H1 (cell line): ENCODE measurements at regions of chr2 and their contacts with region 1.

Region 1: DNA sequence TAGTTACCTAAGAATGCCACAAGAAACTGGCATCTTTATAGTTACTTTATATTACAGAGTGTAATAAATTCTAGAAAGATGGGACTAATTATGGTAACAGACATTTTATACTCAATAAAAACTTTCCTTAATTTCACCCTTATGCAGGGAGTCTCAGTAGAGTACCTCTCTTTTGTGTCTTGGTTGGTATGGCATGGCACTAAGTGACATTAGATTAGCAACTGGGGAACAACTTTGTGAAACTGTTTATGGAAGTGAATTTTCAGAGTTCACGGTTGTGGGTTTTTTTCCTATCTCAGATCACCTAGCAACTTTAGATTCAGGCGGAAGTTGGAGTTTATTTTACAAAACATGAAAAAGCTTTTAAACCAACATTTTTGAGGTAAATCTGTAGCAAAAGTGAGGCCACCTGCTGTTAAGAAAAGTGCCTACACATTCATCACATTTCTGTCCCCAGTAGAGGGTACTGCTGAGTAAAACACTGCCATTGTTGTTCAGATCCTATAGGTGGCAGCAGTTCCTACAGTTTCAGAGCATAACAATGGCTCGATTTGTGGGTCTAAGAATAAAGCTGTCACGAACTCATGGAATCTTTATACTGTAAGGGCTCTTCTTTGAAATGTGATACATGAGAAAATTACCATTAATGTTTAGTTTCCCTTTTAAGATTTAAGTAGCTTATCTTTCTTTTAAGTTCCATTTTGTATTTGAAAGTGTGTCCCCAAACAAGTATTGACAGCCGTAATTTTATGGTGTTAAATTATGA is 117.6 kb downstream of the CAMKMT start:
- DNase-seq: peak in 1 of 2 experiments; percentile 5
- H3K4me3 ChIP-seq: no peak overlapping the region
- H3K27ac ChIP-seq: no peak overlapping the region
- H3K4me1 ChIP-seq: peaks cover 0 to 3% (median 1%) of the 10 kb centered on the region in 4 experiments; a peak in 1 of 7 replicates
- H3K27me3 ChIP-seq: peaks cover 0 to 1% (median 0%) of the 10 kb centered on the region in 4 experiments; a peak in 1 of 7 replicates
- CTCF ChIP-seq: peak in 2 of 3 experiments; percentile 100; a peak in 3 of 4 replicates
- EP300 ChIP-seq: no peak
- POLR2A ChIP-seq: no peak
- RAD21 ChIP-seq: peak; percentile 94 to 97

Region 2: GRCh38 chr2:44429034-44429433 is 50.3 kb before region 1 on chr2:
- CTCF ChIA-PET with region 1: interaction called, 10 read pairs
- POLR2A ChIA-PET with region 1: no interaction called
- DNase-seq: no peak
- H3K4me3 ChIP-seq: no peak overlapping the region
- H3K27ac ChIP-seq: no peak overlapping the region
- H3K4me1 ChIP-seq: peaks cover 4 to 26% (median 13%) of the 10 kb centered on the region in 4 experiments; a peak in 6 of 7 replicates
- H3K27me3 ChIP-seq: no peaks in the 10 kb centered on the region
- CTCF ChIP-seq: no peak
- EP300 ChIP-seq: no peak
- POLR2A ChIP-seq: no peak
- RAD21 ChIP-seq: no peak

Region 3: DNA sequence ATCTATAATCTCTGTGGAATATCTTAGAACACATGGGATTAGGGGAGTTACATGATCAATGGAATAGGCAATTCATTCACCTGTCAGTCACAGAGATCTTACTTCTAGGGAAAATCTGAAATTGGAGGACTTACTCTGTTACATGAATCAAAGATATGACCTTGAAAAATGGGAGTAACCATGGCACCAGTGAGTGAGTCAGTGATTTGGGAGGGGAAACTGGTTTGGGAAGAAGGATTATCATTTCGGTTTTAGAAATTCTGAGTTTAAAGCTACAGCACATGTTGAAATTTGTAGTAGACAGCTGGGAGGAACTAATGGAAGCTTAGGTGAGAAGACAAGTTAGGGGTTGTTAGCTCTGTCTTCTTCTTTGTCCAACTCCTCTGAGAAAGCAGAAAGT is 36.1 kb after region 1 on chr2:
- CTCF ChIA-PET with region 1: interaction called, 15 read pairs
- POLR2A ChIA-PET with region 1: no interaction called
- DNase-seq: no peak
- H3K4me3 ChIP-seq: no peak overlapping the region
- H3K27ac ChIP-seq: no peak overlapping the region
- H3K4me1 ChIP-seq: peaks cover 0 to 3% (median 0%) of the 10 kb centered on the region in 4 experiments; a peak in 1 of 7 replicates
- H3K27me3 ChIP-seq: no peaks in the 10 kb centered on the region
- CTCF ChIP-seq: no peak
- EP300 ChIP-seq: no peak
- POLR2A ChIP-seq: no peak
- RAD21 ChIP-seq: no peak

Region 4: GRCh38 chr2:44602446-44602845 is 123.1 kb after region 1 on chr2:
- CTCF ChIA-PET with region 1: interaction called, 11 read pairs
- POLR2A ChIA-PET with region 1: no interaction called
- DNase-seq: no peak
- H3K4me3 ChIP-seq: no peak overlapping the region
- H3K27ac ChIP-seq: no peak overlapping the region
- H3K4me1 ChIP-seq: no peaks in the 10 kb centered on the region
- H3K27me3 ChIP-seq: no peaks in the 10 kb centered on the region
- CTCF ChIP-seq: no peak
- EP300 ChIP-seq: no peak
- POLR2A ChIP-seq: no peak
- RAD21 ChIP-seq: no peak

Region 5: GRCh38 chr2:44707945-44708660 is 228.8 kb after region 1 on chr2:
- CTCF ChIA-PET with region 1: interaction called, 14 read pairs
- POLR2A ChIA-PET with region 1: no interaction called
- DNase-seq: no peak
- H3K4me3 ChIP-seq: no peak overlapping the region
- H3K27ac ChIP-seq: no peak overlapping the region
- H3K4me1 ChIP-seq: peaks cover 1 to 30% (median 12%) of the 10 kb centered on the region in 4 experiments; a peak in 6 of 7 replicates
- H3K27me3 ChIP-seq: no peaks in the 10 kb centered on the region
- CTCF ChIP-seq: no peak
- EP300 ChIP-seq: no peak
- POLR2A ChIP-seq: no peak
- RAD21 ChIP-seq: no peak

Region 6: DNA sequence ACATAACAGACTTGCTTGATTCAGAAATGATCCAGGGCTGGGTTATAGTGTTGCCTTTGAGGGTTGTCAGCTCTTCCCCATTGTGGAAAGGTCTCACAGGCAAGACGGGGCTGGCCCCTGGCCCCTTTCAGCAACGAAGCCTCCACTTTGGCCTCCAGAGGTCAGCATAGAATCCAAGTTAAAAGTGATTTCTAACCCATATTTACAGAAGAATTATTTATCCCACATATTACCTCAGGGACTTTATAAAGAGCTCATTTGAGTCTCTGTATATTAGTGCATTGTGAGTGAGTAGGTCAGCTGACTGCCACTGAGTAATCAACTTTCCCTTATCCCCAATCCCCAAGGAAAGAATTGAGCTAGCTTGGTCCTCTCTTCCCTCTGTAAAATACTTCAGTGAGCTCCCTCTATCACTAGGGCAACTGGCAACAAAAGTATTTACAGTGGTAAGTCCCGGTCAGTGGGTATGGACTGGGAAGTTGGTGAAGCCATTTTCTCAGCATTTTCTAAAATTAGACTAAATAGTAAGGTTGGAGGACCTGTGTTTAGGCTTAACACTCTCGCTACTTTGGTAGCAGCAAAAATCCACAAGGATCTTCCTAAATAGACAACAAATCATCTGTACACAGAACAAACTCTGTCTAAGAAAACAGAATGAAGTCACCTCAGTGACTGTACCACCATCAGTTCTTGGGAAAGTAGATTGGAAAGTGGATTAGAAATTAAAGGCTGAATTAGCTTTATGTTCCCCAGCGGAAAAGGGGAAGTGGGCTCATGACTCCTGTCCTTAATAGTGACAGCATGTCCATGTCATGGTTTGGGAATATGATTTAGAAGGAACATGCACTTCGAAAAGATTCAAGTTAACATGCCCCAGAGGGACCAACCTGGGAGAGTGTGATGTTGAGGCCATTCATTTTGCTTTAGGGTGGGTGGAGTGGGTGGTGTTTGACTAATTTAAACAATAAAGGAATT is 291.2 kb after region 1 on chr2:
- CTCF ChIA-PET with region 1: interaction called, 11 read pairs
- POLR2A ChIA-PET with region 1: no interaction called
- DNase-seq: peak in 1 of 2 experiments; percentile 38
- H3K4me3 ChIP-seq: no peak overlapping the region
- H3K27ac ChIP-seq: no peak overlapping the region
- H3K4me1 ChIP-seq: peaks cover 5 to 29% (median 21%) of the 10 kb centered on the region in 4 experiments; a peak in 6 of 7 replicates
- H3K27me3 ChIP-seq: peaks cover 0 to 17% (median 14%) of the 10 kb centered on the region in 4 experiments; a peak in 3 of 7 replicates
- CTCF ChIP-seq: peak; percentile 27 to 39 (median 31); a peak in 3 of 4 replicates
- EP300 ChIP-seq: no peak
- POLR2A ChIP-seq: no peak
- RAD21 ChIP-seq: peak; percentile 46 to 59; a peak in 3 of 4 replicates